GM12878 (cell line): ENCODE measurements at regions of chr3 and their contacts with region 1.

Region 1: DNA sequence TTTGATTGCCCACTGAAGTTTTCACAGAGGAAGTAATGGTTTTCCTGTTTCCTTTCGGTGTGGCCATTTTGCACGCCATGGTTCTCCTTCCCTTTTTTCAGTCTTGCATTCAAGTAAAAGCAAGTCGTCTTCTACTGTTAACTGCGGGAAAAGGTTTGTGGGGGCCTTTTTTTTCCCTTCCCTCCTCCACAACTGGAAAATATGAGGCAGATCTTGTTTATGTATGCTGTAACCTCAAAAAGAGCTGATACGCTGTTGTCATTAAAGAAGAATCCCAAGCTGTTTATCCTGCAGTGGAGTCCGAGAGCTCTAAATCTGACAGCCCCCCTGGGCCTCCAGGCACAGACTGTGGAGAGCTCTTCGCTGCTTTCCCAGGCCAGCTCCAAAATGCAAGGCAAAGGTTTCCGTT is 40.4 kb downstream of the FILIP1L start:
- DNase-seq: no peak
- ATAC-seq: peak; percentile 12; the same call in 2 of the 3 replicates
- H3K4me3 ChIP-seq: peak overlapping the region; percentile 48; the same call in 1 of the 2 replicates
- H3K27ac ChIP-seq: no peak overlapping the region
- H3K4me1 ChIP-seq: peaks cover 21% of the 10 kb centered on the region
- H3K27me3 ChIP-seq: no peaks in the 10 kb centered on the region
- CTCF ChIP-seq: no peak
- EP300 ChIP-seq: peak; percentile 14 to 39; a peak in 2 of 4 replicates
- POLR2A ChIP-seq: no peak
- RAD21 ChIP-seq: no peak

Region 2: DNA sequence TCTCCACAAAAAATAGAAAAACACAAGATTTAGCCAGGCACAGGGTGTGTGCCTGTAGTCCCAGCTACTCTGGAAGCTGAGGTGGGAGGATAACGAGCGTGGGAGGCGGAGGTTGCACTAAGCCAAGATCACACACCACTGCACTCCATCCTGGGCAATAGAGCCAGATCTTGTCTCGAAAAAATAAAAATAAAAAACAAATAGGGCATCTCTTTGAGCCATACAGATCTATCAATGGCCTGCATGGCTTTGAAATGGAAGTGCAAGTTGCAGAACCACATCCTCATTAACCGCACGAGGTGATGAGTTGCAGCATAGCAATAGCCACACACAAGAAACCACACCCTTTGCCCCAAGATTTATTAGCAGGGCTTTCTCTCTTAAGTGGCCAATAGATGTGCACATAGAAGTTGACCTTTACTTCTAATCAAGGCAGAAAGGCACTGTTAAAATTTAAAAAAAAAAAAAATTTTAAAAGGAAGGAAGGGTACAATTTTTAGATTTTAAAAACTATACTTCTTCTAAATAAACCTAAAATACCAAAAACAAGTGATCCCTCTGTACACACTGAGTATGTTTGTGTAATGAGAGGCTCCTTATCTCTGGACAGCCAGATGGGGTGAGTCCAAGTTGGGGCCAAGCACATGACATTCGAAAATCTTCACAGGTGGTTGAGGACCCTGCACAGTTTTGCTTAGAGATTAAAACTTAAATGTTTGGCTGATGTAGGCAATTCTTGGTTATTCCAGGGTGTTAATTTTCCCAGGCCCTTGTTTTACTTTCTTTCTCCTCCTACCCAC is 13.0 kb before region 1 on chr3:
- CTCF ChIA-PET with region 1: interaction called, 43 read pairs
- POLR2A ChIA-PET with region 1: no interaction called
- RAD21 ChIA-PET with region 1: interaction called, 6 read pairs
- SMC1A ChIA-PET with region 1: interaction called, 3 read pairs
- in situ Hi-C with region 1: no loop called
- intact Hi-C with region 1: no loop called
- DNase-seq: no peak
- ATAC-seq: peak; percentile 32; the same call in 2 of the 3 replicates
- H3K4me3 ChIP-seq: no peak overlapping the region
- H3K27ac ChIP-seq: no peak overlapping the region
- H3K4me1 ChIP-seq: no peaks in the 10 kb centered on the region; the same call in 1 of the 2 replicates
- H3K27me3 ChIP-seq: no peaks in the 10 kb centered on the region
- CTCF ChIP-seq: no peak
- EP300 ChIP-seq: no peak
- POLR2A ChIP-seq: no peak
- RAD21 ChIP-seq: no peak

Region 3: GRCh38 chr3:100084100-100084806 is 10.3 kb after region 1 on chr3:
- CTCF ChIA-PET with region 1: interaction called, 26 read pairs
- POLR2A ChIA-PET with region 1: interaction called, 3 read pairs
- RAD21 ChIA-PET with region 1: interaction called, 3 read pairs
- SMC1A ChIA-PET with region 1: interaction called, 31 read pairs
- in situ Hi-C with region 1: no loop called
- intact Hi-C with region 1: no loop called
- DNase-seq: no peak
- ATAC-seq: no peak
- H3K4me3 ChIP-seq: no peak overlapping the region
- H3K27ac ChIP-seq: no peak overlapping the region
- H3K4me1 ChIP-seq: peaks cover 7% of the 10 kb centered on the region
- H3K27me3 ChIP-seq: no peaks in the 10 kb centered on the region
- CTCF ChIP-seq: no peak
- EP300 ChIP-seq: no peak
- POLR2A ChIP-seq: no peak
- RAD21 ChIP-seq: no peak

Region 4: GRCh38 chr3:100352296-100353231 is 278.7 kb after region 1 on chr3:
- CTCF ChIA-PET with region 1: no interaction called
- POLR2A ChIA-PET with region 1: no interaction called
- RAD21 ChIA-PET with region 1: no interaction called
- SMC1A ChIA-PET with region 1: no interaction called
- in situ Hi-C with region 1: no loop called
- intact Hi-C with region 1: no loop called
- DNase-seq: no peak
- ATAC-seq: no peak
- H3K4me3 ChIP-seq: no peak overlapping the region
- H3K27ac ChIP-seq: no peak overlapping the region
- H3K4me1 ChIP-seq: no peaks in the 10 kb centered on the region
- H3K27me3 ChIP-seq: no peaks in the 10 kb centered on the region
- CTCF ChIP-seq: no peak
- EP300 ChIP-seq: no peak
- POLR2A ChIP-seq: no peak
- RAD21 ChIP-seq: no peak